SK-N-SH (cell line): ENCODE measurements at regions of chr1 and their contacts with region 1.

Region 1: GRCh38 chr1:6554031-6554906 is at the start of gene NOL9:
- DNase-seq: peak; percentile 99
- H3K4me3 ChIP-seq: peak within 1 kb of the TSS; percentile 82 to 86
- H3K27ac ChIP-seq: peak within 1 kb of the TSS; percentile 46 to 48; a peak in 3 of 4 replicates
- H3K4me1 ChIP-seq: peaks cover 0 to 14% of the 10 kb centered on the region in 2 experiments; a peak in 1 of 4 replicates
- H3K27me3 ChIP-seq: no peaks in the 10 kb centered on the region
- CTCF ChIP-seq: peak; percentile 77
- EP300 ChIP-seq: peak in 1 of 2 experiments; percentile 8; a peak in 1 of 4 replicates
- RAD21 ChIP-seq: peak; percentile 61
- polyA plus RNA-seq, gene NOL9: 7.1 and 7.9 TPM in 2 replicates

Region 2: DNA sequence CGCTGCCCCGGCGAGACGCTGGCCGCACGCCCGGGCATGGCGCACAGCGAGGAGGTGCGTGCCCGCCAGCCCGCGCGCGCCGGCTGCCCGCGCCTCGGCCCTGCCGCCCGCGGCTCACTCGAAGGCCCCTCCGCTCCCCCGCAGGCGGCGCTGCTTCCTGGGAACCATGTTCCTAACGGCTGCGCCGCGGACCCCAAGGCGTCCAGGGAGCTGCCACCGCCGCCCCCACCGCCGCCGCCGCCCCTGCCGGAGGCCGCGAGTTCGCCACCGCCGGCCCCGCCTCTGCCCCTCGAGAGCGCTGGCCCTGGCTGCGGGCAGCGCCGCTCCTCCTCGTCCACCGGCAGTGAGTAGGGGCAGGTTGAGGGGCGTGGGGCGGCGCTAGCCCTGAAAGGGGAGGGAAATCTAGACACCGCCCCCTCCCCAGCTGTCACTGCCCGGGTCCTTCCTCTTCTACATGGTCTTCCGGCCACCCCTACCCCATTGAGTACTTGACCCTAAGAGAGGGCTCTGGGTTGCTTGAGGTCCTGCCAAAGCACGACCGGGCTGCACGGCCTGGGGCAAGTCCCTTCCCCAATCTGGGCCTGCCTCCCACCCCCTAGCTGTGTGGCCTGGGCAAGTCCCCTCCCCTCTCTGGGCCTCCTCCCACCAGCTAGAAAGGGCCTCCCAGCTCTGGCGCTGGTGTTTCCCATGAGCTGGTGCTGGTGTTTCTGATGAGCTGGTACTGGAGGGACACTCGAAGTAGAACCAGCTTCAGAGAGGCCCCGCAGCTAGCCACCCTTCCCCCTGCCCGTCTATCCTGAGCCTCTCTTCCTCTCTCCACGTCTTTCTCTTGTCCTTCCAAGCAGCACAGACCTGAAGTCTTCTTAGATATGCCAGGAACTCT is 105.3 kb before region 1 on chr1:
- CTCF ChIA-PET with region 1: interaction called, 11 read pairs
- POLR2A ChIA-PET with region 1: no interaction called
- DNase-seq: peak; percentile 78
- H3K4me3 ChIP-seq: peak overlapping the region in 1 of 2 experiments; percentile 12; a peak in 1 of 4 replicates
- H3K27ac ChIP-seq: no peak overlapping the region
- H3K4me1 ChIP-seq: no peaks in the 10 kb centered on the region; a peak in 1 of 4 replicates
- H3K27me3 ChIP-seq: peaks cover 44% of the 10 kb centered on the region
- CTCF ChIP-seq: no peak
- EP300 ChIP-seq: no peak
- RAD21 ChIP-seq: no peak

Region 3: DNA sequence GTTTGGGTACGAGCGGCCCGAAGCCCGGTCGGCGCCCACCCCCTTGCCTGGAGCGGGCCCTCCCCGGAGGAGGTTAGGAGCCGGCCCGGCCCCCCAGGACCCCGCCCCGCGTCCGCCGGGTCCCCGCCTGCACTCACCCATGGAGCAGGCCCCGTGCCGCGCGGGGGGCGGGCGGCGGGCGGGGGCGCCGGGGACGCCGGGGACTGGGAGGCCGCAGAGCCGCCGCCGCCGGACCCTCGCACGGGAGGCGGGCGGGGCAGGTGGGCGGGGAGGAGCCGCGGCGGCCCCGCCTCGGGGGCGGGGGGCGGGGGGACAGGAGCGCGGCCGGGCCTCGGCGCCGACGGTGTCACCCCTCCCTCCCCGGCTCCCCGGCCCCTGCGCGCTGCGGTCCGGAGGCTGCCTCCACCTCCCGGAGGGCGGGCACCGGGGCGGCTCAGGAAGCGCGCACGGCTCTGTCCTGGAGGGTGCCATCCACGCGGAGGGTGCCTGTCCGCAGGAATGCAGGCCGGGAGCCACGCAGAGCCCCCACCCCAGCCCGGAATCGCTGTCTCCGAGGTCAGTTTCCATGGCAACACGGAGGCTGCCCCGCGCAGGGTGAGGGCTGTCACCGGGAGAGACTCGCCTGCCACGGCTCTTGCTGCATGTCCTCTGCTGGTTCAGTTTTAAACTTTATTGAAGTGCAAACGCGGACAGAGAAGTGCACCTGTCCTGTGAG is 56.9 kb before region 1 on chr1:
- CTCF ChIA-PET with region 1: interaction called, 15 read pairs
- POLR2A ChIA-PET with region 1: interaction called, 4 read pairs
- DNase-seq: peak; percentile 92
- H3K4me3 ChIP-seq: peak overlapping the region; percentile 65 to 69
- H3K27ac ChIP-seq: peak overlapping the region in 1 of 2 experiments; percentile 80; a peak in 2 of 4 replicates
- H3K4me1 ChIP-seq: peaks cover 0 to 74% of the 10 kb centered on the region in 2 experiments; a peak in 2 of 4 replicates
- H3K27me3 ChIP-seq: no peaks in the 10 kb centered on the region
- CTCF ChIP-seq: no peak
- EP300 ChIP-seq: no peak
- RAD21 ChIP-seq: no peak

Region 4: GRCh38 chr1:6523566-6523965 is 30.7 kb before region 1 on chr1:
- CTCF ChIA-PET with region 1: interaction called, 19 read pairs
- POLR2A ChIA-PET with region 1: no interaction called
- DNase-seq: peak; percentile 77
- H3K4me3 ChIP-seq: no peak overlapping the region
- H3K27ac ChIP-seq: peak overlapping the region in 1 of 2 experiments; percentile 39; a peak in 2 of 4 replicates
- H3K4me1 ChIP-seq: peaks cover 0 to 28% of the 10 kb centered on the region in 2 experiments; a peak in 2 of 4 replicates
- H3K27me3 ChIP-seq: no peaks in the 10 kb centered on the region
- CTCF ChIP-seq: peak; percentile 69
- EP300 ChIP-seq: no peak
- RAD21 ChIP-seq: peak; percentile 88

Region 5: DNA sequence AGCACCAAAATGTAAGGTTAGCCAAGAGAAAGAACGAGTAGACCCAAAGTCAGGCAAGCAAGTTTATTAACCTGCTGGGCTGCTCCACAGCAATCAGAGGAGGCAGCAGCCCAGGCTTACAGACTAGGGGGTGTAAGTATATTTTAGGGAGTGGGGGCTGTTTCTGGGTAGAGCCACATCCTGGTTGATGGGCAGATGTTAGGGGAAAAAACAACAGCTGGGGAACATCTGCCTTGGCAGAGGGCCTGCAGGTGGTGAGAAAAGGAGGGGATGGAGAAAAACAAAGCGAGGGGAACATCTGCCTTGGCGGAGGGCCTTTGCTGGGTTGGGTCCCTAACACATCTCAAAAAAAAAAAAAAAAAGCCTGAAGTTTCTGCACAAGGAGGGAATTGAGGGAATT is 15.8 kb after region 1 on chr1:
- CTCF ChIA-PET with region 1: interaction called, 18 read pairs
- POLR2A ChIA-PET with region 1: no interaction called
- DNase-seq: no peak
- H3K4me3 ChIP-seq: no peak overlapping the region
- H3K27ac ChIP-seq: no peak overlapping the region
- H3K4me1 ChIP-seq: no peaks in the 10 kb centered on the region
- H3K27me3 ChIP-seq: no peaks in the 10 kb centered on the region; the same call in 1 of the 2 replicates
- CTCF ChIP-seq: no peak
- EP300 ChIP-seq: no peak
- RAD21 ChIP-seq: no peak

Region 6: GRCh38 chr1:6602669-6603237 is 48.5 kb after region 1 on chr1 and contains the start of gene KLHL21:
- CTCF ChIA-PET with region 1: interaction called, 19 read pairs
- POLR2A ChIA-PET with region 1: interaction called, 4 read pairs
- DNase-seq: peak; percentile 97
- H3K4me3 ChIP-seq: peak within 1 kb of the TSS; percentile 73 to 76
- H3K27ac ChIP-seq: peak within 1 kb of the TSS; percentile 54 to 70
- H3K4me1 ChIP-seq: peaks cover 10 to 26% of the 10 kb centered on the region in 2 experiments; a peak in 2 of 4 replicates
- H3K27me3 ChIP-seq: no peaks in the 10 kb centered on the region
- CTCF ChIP-seq: no peak
- EP300 ChIP-seq: no peak
- RAD21 ChIP-seq: no peak
- polyA plus RNA-seq, gene KLHL21: 9.0 and 12.5 TPM in 2 replicates

Region 7: DNA sequence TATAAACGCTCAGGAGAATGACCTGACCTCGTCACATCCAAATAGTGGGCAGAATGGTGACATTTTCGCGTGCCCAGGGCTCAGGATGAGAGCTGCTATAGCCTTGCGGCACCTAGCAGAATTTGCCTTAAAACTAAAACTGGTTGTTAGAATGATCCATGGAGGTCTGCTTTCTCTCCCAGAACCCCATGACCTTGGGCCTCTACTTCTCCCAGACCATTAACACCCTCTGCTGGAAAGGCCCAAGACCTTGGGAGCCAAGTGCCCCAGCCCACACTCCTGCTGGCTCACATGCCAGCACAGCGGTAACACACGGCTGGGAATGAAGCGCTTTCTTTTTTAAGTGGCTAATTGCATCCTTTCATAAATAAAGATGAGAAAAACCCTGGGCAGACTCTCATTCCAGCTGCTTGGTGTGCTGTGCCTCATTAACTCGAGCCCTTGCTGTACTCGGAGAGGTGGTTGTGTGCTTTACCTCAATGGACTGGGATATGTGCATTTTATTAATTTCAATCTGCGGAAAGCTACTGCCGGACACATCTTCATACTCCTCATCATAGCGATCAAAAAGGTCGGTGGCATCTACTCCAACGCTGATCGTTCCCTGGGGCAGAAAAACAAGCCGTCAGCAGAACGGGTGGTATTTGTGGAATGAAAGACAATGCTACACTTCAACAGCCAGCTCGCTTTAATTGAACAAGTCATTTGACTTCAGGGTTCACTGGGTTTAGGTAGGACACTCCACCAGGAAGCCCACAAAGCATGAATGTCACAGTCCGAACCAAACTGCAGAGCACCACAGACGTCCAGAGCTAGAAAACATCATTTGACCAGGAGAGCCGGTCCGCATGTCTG is 99.4 kb after region 1 on chr1:
- CTCF ChIA-PET with region 1: no interaction called
- POLR2A ChIA-PET with region 1: no interaction called
- DNase-seq: no peak
- H3K4me3 ChIP-seq: no peak overlapping the region
- H3K27ac ChIP-seq: no peak overlapping the region
- H3K4me1 ChIP-seq: no peaks in the 10 kb centered on the region
- H3K27me3 ChIP-seq: no peaks in the 10 kb centered on the region
- CTCF ChIP-seq: no peak
- EP300 ChIP-seq: no peak
- RAD21 ChIP-seq: no peak

Region 8: DNA sequence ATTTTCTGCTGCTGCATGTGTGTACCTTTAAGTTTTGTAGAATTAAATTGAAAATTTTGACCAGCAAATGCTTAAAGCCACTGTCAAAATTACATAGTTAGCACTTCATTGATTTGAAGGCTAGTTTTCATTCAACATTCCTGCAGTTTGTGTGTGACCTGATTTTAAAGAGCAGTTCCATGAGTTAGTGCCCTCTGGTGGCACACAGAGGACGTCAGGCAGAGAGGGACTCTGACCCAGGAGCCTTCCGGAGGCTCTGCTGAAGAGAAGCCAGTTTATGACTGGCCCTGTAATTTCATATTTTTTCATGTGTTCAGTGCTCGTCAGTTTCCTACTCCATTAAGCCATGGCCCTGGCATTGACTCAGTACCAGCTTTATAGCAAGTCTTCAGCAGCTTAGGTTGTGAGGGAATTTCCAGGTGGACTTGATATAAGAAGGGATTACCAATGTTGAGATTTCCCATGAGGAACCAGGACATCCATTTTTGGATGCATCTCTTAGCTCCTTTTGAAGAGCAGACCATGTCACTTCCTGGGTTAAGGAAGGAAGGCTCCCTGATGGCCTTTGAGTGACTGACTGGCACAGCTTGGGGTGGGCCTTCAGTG is 335.7 kb after region 1 on chr1:
- CTCF ChIA-PET with region 1: no interaction called
- POLR2A ChIA-PET with region 1: no interaction called
- DNase-seq: peak; percentile 69
- H3K4me3 ChIP-seq: peak overlapping the region in 1 of 2 experiments; percentile 48; a peak in 1 of 4 replicates
- H3K27ac ChIP-seq: no peak overlapping the region
- H3K4me1 ChIP-seq: peaks cover 0 to 4% of the 10 kb centered on the region in 2 experiments; a peak in 2 of 4 replicates
- H3K27me3 ChIP-seq: no peaks in the 10 kb centered on the region
- CTCF ChIP-seq: peak; percentile 78
- EP300 ChIP-seq: no peak
- RAD21 ChIP-seq: peak; percentile 71